ENCODE measurements at regions of chr19 and their contacts with region 1.

Region 1: DNA sequence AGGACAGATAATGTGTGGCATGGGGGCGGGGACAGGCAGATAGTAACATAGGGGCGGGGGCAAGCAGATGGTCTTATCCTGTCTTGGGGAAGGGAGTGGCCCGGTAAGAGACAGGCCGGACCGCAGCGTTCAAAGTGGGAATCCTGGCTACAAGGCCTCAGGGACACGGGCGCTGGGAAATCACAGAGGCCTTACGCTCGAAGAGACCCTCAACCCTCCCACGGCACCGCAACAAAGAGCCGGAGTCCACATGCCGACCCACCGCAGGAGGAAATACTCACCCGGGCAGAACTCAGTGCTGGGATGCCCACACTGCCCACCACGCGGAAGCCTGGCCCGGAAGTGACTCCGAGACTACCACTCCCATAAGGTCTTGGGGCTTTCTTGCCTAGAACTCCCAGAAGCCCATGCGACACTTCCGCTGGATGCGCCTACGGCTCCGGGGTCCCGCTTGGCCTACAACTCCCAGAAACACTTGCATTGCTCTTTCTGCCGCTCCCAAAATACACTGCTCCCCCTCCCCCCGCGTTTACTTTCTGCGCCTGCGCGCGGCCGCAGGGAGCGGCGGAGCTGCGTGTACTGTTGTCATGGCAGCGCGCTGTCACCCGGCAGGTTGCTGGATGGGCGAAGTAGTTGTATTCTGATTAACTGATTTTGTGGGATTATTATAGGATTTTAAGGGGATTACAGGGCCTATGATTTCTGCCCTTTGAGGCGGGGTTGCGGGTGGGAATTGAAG is at the start of gene CTU1:
- DNase-seq: peak; percentile 97 to 100 (median 99)

Region 2: GRCh38 chr19:50804420-50805272 is 303.6 kb before region 1 on chr19:
- intact Hi-C with region 1: loop called (anchors 5 kb)
- DNase-seq: peak; percentile 96 to 100 (median 99)

Measured in posterior cingulate gyrus (tissue), 11 donors.